ENCODE measurements at regions of chr18 and their contacts with region 1.

Region 1: DNA sequence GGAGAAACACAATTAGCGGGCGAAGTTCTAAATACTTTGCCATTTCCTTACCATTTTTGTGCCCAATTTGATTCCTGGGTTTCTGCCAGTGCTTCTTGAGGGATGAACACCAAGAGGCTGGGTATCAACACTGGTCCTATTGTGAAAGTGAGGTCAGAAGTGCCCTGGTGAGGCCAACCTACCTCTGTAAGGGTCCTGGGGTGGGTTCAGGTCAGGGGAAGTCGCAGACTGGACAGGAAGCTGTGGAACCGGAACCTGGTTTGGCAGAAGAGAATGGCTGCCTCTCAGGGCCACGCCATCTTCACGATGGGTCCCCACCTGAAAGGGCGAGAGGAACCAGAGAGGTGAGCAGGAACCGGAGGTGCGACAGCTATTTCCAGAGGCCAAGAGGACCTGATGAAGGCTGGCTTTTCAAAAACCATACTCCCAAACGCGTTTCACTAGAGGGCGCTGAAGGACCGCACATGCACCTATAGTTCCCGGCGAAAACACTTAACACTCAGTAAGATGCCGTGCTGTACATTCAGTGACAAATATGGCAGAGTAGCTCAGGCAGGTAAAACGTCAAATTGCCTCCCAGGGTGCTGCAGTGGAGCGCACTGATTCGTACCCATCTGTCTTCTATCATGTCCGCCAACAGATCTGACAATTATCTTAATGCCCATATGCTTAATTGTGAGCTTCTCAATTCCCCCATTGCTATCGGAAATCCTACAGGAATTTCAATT is 275.3 kb upstream of the CCDC68 start:
- DNase-seq: peak; percentile 82
- ATAC-seq: peak; percentile 95
- H3K4me3 Mint-ChIP-seq: no peak overlapping the region
- H3K27ac Mint-ChIP-seq: no peak overlapping the region; the same call in 1 of the 2 replicates
- H3K4me1 Mint-ChIP-seq: peaks cover 11% of the 10 kb centered on the region
- H3K27me3 Mint-ChIP-seq: no peaks in the 10 kb centered on the region
- CTCF ChIP-seq: peak; percentile 79

Region 2: DNA sequence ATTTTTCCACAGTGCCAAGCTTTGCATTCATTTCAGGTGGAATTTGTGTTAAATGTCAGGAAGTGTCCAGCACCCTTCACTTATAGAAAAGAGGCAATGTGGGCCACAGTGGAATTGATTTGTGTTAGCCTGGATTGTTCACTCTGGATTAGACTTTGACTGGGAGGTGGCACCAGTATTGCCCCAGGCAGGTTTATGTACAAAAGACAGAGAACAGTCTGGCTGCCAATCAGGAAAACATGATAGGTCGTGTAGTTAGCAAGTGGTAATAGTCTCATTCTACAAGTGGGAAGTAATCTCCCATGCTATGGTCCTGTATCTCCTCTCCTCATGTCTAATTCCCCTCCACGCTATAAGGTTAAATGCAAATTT is 360.7 kb before region 1 on chr18:
- CTCF ChIA-PET with region 1: no interaction called
- POLR2A ChIA-PET with region 1: no interaction called
- DNase-seq: no peak
- ATAC-seq: no peak
- H3K4me3 Mint-ChIP-seq: no peak overlapping the region
- H3K27ac Mint-ChIP-seq: no peak overlapping the region
- H3K4me1 Mint-ChIP-seq: no peaks in the 10 kb centered on the region
- H3K27me3 Mint-ChIP-seq: no peaks in the 10 kb centered on the region
- CTCF ChIP-seq: no peak

Region 3: GRCh38 chr18:55166260-55166598 is 68.3 kb before region 1 on chr18:
- CTCF ChIA-PET with region 1: no interaction called
- POLR2A ChIA-PET with region 1: no interaction called
- DNase-seq: no peak
- ATAC-seq: no peak
- H3K4me3 Mint-ChIP-seq: no peak overlapping the region
- H3K27ac Mint-ChIP-seq: no peak overlapping the region
- H3K4me1 Mint-ChIP-seq: no peaks in the 10 kb centered on the region
- H3K27me3 Mint-ChIP-seq: no peaks in the 10 kb centered on the region; the same call in 1 of the 2 replicates
- CTCF ChIP-seq: no peak

Region 4: GRCh38 chr18:55214969-55215368 is 19.6 kb before region 1 on chr18:
- CTCF ChIA-PET with region 1: interaction called, 20 read pairs
- POLR2A ChIA-PET with region 1: no interaction called
- DNase-seq: peak; percentile 16
- ATAC-seq: peak; percentile 77
- H3K4me3 Mint-ChIP-seq: no peak overlapping the region
- H3K27ac Mint-ChIP-seq: 0 out of 2 replicates have a peak overlapping the region, but pooled peaks have one; percentile 30
- H3K4me1 Mint-ChIP-seq: peaks cover 27% of the 10 kb centered on the region
- H3K27me3 Mint-ChIP-seq: peaks cover 3% of the 10 kb centered on the region; the same call in 1 of the 2 replicates
- CTCF ChIP-seq: no peak

Region 5: GRCh38 chr18:55251254-55251971 is 16.9 kb after region 1 on chr18:
- CTCF ChIA-PET with region 1: interaction called, 17 read pairs
- POLR2A ChIA-PET with region 1: no interaction called
- DNase-seq: peak; percentile 19
- ATAC-seq: peak; percentile 95
- H3K4me3 Mint-ChIP-seq: peak overlapping the region; percentile 15
- H3K27ac Mint-ChIP-seq: peak overlapping the region; percentile 90
- H3K4me1 Mint-ChIP-seq: peaks cover 29% of the 10 kb centered on the region
- H3K27me3 Mint-ChIP-seq: no peaks in the 10 kb centered on the region
- CTCF ChIP-seq: no peak

Region 6: GRCh38 chr18:55322178-55322735 is 87.7 kb after region 1 on chr18:
- CTCF ChIA-PET with region 1: interaction called, 14 read pairs
- POLR2A ChIA-PET with region 1: no interaction called
- DNase-seq: peak; percentile 71
- ATAC-seq: peak; percentile 84
- H3K4me3 Mint-ChIP-seq: peak overlapping the region; percentile 84
- H3K27ac Mint-ChIP-seq: no peak overlapping the region
- H3K4me1 Mint-ChIP-seq: peaks cover 70% of the 10 kb centered on the region
- H3K27me3 Mint-ChIP-seq: no peaks in the 10 kb centered on the region
- CTCF ChIP-seq: no peak

Region 7: GRCh38 chr18:55781481-55781957 is 547.0 kb after region 1 on chr18:
- CTCF ChIA-PET with region 1: interaction called, 14 read pairs
- POLR2A ChIA-PET with region 1: no interaction called
- DNase-seq: peak; percentile 70
- ATAC-seq: peak; percentile 65
- H3K4me3 Mint-ChIP-seq: peak overlapping the region; percentile 63
- H3K27ac Mint-ChIP-seq: peak overlapping the region; percentile 76
- H3K4me1 Mint-ChIP-seq: peaks cover 46% of the 10 kb centered on the region
- H3K27me3 Mint-ChIP-seq: 0 out of 2 replicates have a peak, but pooled peaks cover 5% of the 10 kb centered on the region
- CTCF ChIP-seq: peak; percentile 51; the same call in 1 of the 2 replicates

Measured in WTC11 (cell line).